ENCODE measurements at regions of chr7 and their contacts with region 1.

Region 1: GRCh38 chr7:116180302-116180701 is 30.0 kb upstream of the TES start:
- DNase-seq: peak; percentile 22
- H3K4me3 Mint-ChIP-seq: no peak overlapping the region
- H3K27ac Mint-ChIP-seq: no peak overlapping the region
- H3K4me1 Mint-ChIP-seq: no peaks in the 10 kb centered on the region
- H3K27me3 Mint-ChIP-seq: no peaks in the 10 kb centered on the region
- CTCF ChIP-seq: peak; percentile 75

Region 2: DNA sequence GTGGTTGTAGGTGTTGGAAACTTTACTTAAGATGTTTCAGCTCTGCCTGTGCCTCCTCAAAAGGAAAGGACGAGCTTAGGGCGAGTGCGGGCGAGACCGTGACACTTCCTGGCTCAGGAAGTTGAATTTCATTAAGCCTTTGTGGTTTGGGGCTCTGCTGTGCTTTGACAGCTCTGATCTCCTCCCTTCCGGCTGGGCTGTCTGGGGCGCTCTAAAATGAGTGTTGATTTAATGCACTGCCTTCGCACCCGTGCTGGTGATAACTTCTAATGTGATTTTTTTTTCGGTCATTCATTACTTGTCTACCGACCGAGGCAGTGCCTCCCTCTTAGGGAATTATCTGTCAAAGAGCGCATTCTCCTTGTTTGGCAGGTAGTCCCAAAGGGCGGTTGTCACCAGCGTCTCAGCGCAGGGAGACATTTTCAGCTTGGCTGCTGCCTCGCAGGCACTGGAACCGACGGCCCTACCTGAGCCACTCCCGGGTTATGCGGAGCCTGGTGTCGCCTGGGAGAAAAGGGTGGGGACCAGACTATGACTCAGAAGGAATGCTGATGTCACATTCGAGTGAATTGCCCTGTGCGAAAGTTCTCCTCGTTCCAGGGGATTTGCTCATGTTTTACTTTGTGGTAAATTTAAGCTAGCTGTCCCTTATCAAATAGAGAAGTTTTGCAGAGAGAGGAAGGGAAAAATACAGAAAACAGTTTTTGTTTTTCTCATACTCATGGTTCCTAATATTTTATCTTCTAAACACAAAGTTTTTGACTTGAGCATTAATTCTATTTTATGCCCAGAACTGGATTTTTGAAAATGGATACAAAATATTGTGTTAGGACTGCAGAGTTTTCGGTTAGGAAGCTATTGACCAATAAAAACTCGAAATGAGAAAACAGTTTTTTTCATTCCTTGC is 31.0 kb after region 1 on chr7:
- CTCF ChIA-PET with region 1: interaction called, 10 read pairs
- intact Hi-C with region 1: no loop called
- DNase-seq: peak; percentile 90
- H3K4me3 Mint-ChIP-seq: peak overlapping the region; percentile 98
- H3K27ac Mint-ChIP-seq: peak overlapping the region; percentile 99
- H3K4me1 Mint-ChIP-seq: peaks cover 40% of the 10 kb centered on the region
- H3K27me3 Mint-ChIP-seq: no peaks in the 10 kb centered on the region
- CTCF ChIP-seq: no peak